Right lobe of liver (tissue), 6 donors: ENCODE measurements at regions of chr1 and their contacts with region 1.

Region 1: GRCh38 chr1:6646499-6647148 is 22.0 kb downstream of the THAP3 start:
- DNase-seq: no peak
- ATAC-seq: peak; percentile 62 to 80 (median 74)
- H3K4me3 ChIP-seq: no peak overlapping the region
- H3K27ac ChIP-seq: no peak overlapping the region
- H3K4me1 ChIP-seq: no peaks in the 10 kb centered on the region
- H3K27me3 ChIP-seq: no peaks in the 10 kb centered on the region
- CTCF ChIP-seq: peak; percentile 63 to 70 (median 64)
- POLR2A ChIP-seq: no peak

Region 2: GRCh38 chr1:6483036-6483760 is 163.4 kb before region 1 on chr1:
- intact Hi-C with region 1: loop called in 1 of 2 experiments (anchors 5 kb)
- DNase-seq: no peak
- ATAC-seq: peak in 2 of 4 donors; percentile 7 to 31
- H3K4me3 ChIP-seq: no peak overlapping the region
- H3K27ac ChIP-seq: no peak overlapping the region
- H3K4me1 ChIP-seq: no peaks in the 10 kb centered on the region
- H3K27me3 ChIP-seq: no peaks in the 10 kb centered on the region
- CTCF ChIP-seq: no peak
- POLR2A ChIP-seq: no peak